ENCODE measurements at regions of chr11 and their contacts with region 1.

Region 1: DNA sequence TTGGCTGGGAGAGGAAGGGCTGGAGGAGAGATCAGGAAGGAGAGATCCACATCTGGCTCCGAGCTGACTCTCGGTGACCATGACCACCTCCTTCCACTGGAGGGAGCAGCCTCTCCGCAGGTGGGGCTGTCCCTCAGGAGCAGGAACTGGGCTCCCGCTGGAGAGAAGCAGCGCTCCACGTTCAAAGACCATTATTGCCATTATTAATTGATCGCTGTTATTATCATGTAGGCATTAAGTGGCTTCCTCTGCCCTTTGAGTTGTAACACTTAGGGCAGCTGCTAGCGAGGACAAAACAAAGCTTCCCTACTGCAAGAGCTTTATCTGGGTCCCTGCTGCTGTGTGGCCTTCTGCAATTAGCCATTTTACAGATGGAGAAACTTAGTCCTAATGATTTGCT is 251.9 kb downstream of the ST3GAL4 start:
- DNase-seq: peak; percentile 10
- H3K4me3 ChIP-seq: no peak overlapping the region
- CTCF ChIP-seq: peak; percentile 96

Region 2: GRCh38 chr11:126310228-126310991 is 297.0 kb before region 1 on chr11:
- CTCF ChIA-PET with region 1: interaction called, 10 read pairs
- POLR2A ChIA-PET with region 1: no interaction called
- DNase-seq: no peak
- H3K4me3 ChIP-seq: no peak overlapping the region
- CTCF ChIP-seq: peak; percentile 78

Region 3: DNA sequence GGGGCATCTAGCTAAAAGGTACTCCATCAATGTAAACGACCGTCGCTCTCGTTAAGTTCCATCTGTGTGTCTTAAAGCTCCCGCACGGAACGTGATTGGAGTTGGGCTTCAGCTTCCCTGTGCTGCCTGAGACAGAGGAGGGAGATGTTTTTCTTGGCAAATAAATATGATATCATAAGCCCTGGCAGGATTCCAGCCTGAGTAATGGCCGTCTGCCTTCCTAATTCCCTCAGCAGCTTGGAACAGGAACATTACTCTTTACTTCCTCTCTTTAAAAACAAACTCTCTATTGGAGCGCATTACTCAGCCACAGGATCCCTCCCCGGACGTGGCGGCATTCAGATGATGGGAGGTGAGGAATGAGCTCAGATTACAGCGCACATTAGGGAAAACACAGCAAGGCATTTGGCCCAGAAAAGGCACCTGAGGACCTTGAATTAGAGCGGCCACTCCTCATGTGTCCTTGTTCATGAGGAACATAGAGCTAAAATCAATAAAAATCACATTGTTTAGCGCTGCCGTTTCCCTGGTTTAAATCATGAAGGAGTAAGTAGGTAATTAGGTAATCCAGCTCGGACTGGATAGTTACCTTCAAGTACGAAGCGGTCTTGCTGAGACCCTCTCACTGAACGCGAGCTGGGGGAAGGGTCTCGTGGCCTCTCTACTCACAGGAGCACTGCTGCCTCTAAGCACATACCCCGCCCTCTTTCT is 21.4 kb before region 1 on chr11:
- CTCF ChIA-PET with region 1: interaction called, 34 read pairs
- POLR2A ChIA-PET with region 1: no interaction called
- DNase-seq: peak; percentile 89
- H3K4me3 ChIP-seq: peak overlapping the region; percentile 36
- CTCF ChIP-seq: no peak

Region 4: DNA sequence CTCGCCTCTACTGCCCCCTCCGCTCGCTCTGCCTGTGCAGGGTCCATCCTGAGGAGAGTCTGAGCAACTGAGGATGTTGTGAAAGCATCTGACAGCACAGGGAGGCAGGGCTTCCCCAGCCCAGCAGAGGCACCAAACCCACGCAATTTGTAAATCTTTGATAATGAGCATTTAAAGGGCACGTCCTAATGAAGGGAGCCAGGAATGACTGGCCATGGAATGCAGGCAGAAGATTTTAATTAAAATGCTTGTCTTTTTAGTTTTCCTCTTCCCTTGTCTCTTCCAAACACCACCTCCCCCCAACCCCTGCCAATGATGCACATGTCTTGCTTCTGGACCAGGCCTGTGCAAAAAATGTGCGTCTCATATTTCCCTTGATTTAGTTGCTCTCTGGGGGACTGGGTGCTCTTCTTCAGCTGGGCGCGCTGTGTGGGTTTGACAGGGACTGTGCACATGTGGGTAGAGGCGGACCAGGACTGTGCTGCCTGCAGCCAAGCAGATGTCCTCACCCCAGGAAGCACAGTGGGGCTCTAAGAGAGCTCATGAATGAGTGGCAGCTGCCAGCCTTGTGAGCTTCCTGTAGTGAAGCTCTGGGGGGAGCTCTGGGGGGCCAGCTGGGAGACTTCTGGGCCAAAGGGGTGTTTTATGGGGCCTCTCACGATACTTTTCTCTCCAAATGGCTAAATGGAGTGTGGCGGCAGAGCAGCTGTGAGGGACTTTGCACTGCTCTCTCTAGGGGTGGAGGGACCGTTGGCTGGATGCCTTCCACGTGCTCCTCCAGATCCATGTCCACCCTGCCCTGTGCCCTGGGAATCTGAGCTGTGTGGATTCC is 21.6 kb after region 1 on chr11:
- CTCF ChIA-PET with region 1: interaction called, 15 read pairs
- POLR2A ChIA-PET with region 1: interaction called, 3 read pairs
- DNase-seq: peak; percentile 82
- H3K4me3 ChIP-seq: no peak overlapping the region
- CTCF ChIP-seq: peak; percentile 44

Region 5: DNA sequence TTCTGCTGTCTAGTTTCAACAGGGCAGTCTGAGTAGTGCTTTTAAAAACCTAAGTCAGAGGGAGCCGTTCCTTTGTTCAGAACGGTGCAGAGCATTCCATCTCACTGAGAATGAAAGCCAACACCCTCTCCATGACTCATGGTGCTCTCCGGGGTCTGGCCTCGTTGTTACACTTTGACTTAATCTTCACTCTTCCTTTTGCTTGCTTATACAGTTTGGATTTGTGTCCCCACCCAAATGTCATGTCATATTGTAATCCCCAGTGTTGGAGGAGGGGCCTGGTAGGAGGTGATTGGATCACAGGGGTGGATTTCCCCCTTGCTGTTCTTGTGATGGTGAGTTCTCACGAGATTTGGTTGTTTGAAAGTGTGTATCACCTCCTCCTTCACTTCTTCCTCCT is 40.4 kb after region 1 on chr11:
- CTCF ChIA-PET with region 1: interaction called, 12 read pairs
- POLR2A ChIA-PET with region 1: interaction called, 3 read pairs
- DNase-seq: peak; percentile 44
- H3K4me3 ChIP-seq: peak overlapping the region; percentile 23; the same call in 1 of the 2 replicates
- CTCF ChIP-seq: no peak

Region 6: GRCh38 chr11:126790550-126791081 is 183.2 kb after region 1 on chr11:
- CTCF ChIA-PET with region 1: interaction called, 12 read pairs
- POLR2A ChIA-PET with region 1: no interaction called
- DNase-seq: peak; percentile 77
- H3K4me3 ChIP-seq: no peak overlapping the region
- CTCF ChIP-seq: peak; percentile 55

Region 7: GRCh38 chr11:127074151-127074761 is 466.9 kb after region 1 on chr11:
- CTCF ChIA-PET with region 1: interaction called, 34 read pairs
- POLR2A ChIA-PET with region 1: no interaction called
- DNase-seq: peak; percentile 29
- H3K4me3 ChIP-seq: no peak overlapping the region
- CTCF ChIP-seq: peak; percentile 73